PC-3 (cell line): ENCODE measurements at regions of chr17 and their contacts with region 1.

Region 1: GRCh38 chr17:68794636-68795434 is 160.4 kb downstream of the ABCA8 start:
- DNase-seq: peak; percentile 57
- ATAC-seq: peak; percentile 78
- H3K4me3 ChIP-seq: no peak overlapping the region
- H3K27ac ChIP-seq: no peak overlapping the region
- H3K4me1 ChIP-seq: peaks cover 25% of the 10 kb centered on the region
- H3K27me3 ChIP-seq: no peaks in the 10 kb centered on the region
- CTCF ChIP-seq: peak; percentile 77

Region 2: DNA sequence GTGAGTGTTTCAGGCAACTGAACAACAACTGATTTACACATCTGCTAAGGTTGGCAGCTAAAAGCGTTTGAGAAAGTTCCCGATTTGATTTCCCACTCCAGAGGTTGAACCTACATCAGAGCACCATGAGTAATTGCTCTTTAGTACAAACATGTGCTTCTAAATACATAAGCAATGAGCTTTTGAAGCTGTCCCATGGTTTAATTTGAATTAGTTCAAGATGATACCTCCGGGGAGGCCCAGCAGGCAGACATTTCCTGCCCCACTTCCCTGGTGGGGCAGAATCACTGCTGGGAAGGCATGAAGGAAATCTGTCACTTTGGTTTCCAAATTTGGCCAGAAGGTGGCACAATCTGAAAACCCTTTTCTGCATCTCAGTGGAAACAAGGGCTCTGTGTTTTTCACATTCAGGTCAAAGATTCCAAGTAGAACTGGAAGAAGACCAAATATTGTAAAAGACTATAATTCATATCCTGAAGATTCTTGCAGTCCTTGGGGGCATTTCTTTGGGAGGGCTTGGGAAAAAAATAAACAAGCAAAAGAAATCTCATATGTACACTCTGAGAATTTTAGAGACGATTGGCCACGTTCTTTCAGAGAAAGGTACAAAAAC is 17.5 kb before region 1 on chr17:
- CTCF ChIA-PET with region 1: interaction called, 8 read pairs
- POLR2A ChIA-PET with region 1: no interaction called
- intact Hi-C with region 1: loop called (anchors 1 kb)
- DNase-seq: peak; percentile 83
- ATAC-seq: peak; percentile 58
- H3K4me3 ChIP-seq: no peak overlapping the region
- H3K27ac ChIP-seq: no peak overlapping the region
- H3K4me1 ChIP-seq: peaks cover 13% of the 10 kb centered on the region
- H3K27me3 ChIP-seq: peaks cover 5% of the 10 kb centered on the region; the same call in 1 of the 2 replicates
- CTCF ChIP-seq: peak; percentile 93

Region 3: GRCh38 chr17:68821860-68822696 is 27.2 kb after region 1 on chr17:
- CTCF ChIA-PET with region 1: interaction called, 5 read pairs
- POLR2A ChIA-PET with region 1: no interaction called
- intact Hi-C with region 1: loop called (anchors 2 kb)
- DNase-seq: peak; percentile 97
- ATAC-seq: peak; percentile 97
- H3K4me3 ChIP-seq: no peak overlapping the region
- H3K27ac ChIP-seq: peak overlapping the region; percentile 48
- H3K4me1 ChIP-seq: peaks cover 25% of the 10 kb centered on the region
- H3K27me3 ChIP-seq: no peaks in the 10 kb centered on the region
- CTCF ChIP-seq: no peak

Region 4: GRCh38 chr17:68835071-68835470 is 40.2 kb after region 1 on chr17:
- CTCF ChIA-PET with region 1: interaction called, 4 read pairs
- POLR2A ChIA-PET with region 1: no interaction called
- intact Hi-C with region 1: loop called (anchors 5 kb)
- DNase-seq: peak; percentile 54
- ATAC-seq: peak; percentile 95
- H3K4me3 ChIP-seq: no peak overlapping the region
- H3K27ac ChIP-seq: peak overlapping the region; percentile 13; the same call in 1 of the 2 replicates
- H3K4me1 ChIP-seq: peaks cover 12% of the 10 kb centered on the region
- H3K27me3 ChIP-seq: no peaks in the 10 kb centered on the region
- CTCF ChIP-seq: no peak

Region 5: GRCh38 chr17:68861602-68862001 is 66.8 kb after region 1 on chr17:
- CTCF ChIA-PET with region 1: no interaction called
- POLR2A ChIA-PET with region 1: no interaction called
- intact Hi-C with region 1: loop called (anchors 5 kb)
- DNase-seq: no peak
- ATAC-seq: no peak
- H3K4me3 ChIP-seq: no peak overlapping the region
- H3K27ac ChIP-seq: no peak overlapping the region
- H3K4me1 ChIP-seq: no peaks in the 10 kb centered on the region
- H3K27me3 ChIP-seq: no peaks in the 10 kb centered on the region
- CTCF ChIP-seq: no peak

Region 6: GRCh38 chr17:68972119-68972704 is 177.4 kb after region 1 on chr17:
- CTCF ChIA-PET with region 1: interaction called, 4 read pairs
- POLR2A ChIA-PET with region 1: no interaction called
- intact Hi-C with region 1: loop called (anchors 1 kb)
- DNase-seq: peak; percentile 62
- ATAC-seq: peak; percentile 65
- H3K4me3 ChIP-seq: no peak overlapping the region
- H3K27ac ChIP-seq: no peak overlapping the region
- H3K4me1 ChIP-seq: no peaks in the 10 kb centered on the region
- H3K27me3 ChIP-seq: peaks cover 8% of the 10 kb centered on the region
- CTCF ChIP-seq: peak; percentile 89